Activated CD8-positive, alpha-beta T cell treated with anti-CD3 and anti-CD28 coated beads, Interleukin-2, amount 10 ng/mL, durations not matched to agents 7 days and 5 days (primary cell): ENCODE measurements at regions of chr5 and their contacts with region 1.

Region 1: GRCh38 chr5:160081495-160081894 is 37.8 kb downstream of the PWWP2A start:
- DNase-seq: no peak
- ATAC-seq: no peak
- H3K4me3 Mint-ChIP-seq: no peak overlapping the region
- H3K27ac Mint-ChIP-seq: no peak overlapping the region
- H3K4me1 Mint-ChIP-seq: no peaks in the 10 kb centered on the region
- H3K27me3 Mint-ChIP-seq: no peaks in the 10 kb centered on the region

Region 2: DNA sequence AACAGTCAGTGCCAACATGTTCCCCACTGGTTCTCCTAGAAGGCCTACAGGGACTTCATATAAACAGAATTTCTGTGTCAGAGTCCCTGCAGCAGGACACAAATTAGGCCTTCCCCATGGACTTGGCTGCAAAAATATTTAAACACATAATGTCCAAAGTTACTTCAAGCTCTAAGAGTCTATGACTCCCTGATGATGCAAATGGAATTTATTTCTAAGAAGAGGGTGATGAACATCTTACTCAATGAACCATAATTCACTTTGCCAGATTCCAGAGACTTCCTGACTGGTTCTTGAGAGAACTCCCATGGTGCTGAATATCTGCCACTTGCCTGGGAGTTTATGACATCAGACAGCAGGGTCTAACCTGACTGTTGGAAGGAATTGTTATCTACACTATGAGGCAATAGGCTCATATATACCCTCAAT is 198.0 kb before region 1 on chr5:
- CTCF ChIA-PET with region 1: no interaction called
- POLR2A ChIA-PET with region 1: no interaction called
- DNase-seq: no peak
- ATAC-seq: no peak
- H3K4me3 Mint-ChIP-seq: no peak overlapping the region
- H3K27ac Mint-ChIP-seq: no peak overlapping the region
- H3K4me1 Mint-ChIP-seq: no peaks in the 10 kb centered on the region
- H3K27me3 Mint-ChIP-seq: peaks cover 5% of the 10 kb centered on the region

Region 3: GRCh38 chr5:159936686-159937329 is 144.7 kb before region 1 on chr5:
- CTCF ChIA-PET with region 1: no interaction called
- POLR2A ChIA-PET with region 1: no interaction called
- DNase-seq: no peak
- ATAC-seq: no peak
- H3K4me3 Mint-ChIP-seq: no peak overlapping the region
- H3K27ac Mint-ChIP-seq: no peak overlapping the region
- H3K4me1 Mint-ChIP-seq: peaks cover 12% of the 10 kb centered on the region
- H3K27me3 Mint-ChIP-seq: peaks cover 33% of the 10 kb centered on the region

Region 4: DNA sequence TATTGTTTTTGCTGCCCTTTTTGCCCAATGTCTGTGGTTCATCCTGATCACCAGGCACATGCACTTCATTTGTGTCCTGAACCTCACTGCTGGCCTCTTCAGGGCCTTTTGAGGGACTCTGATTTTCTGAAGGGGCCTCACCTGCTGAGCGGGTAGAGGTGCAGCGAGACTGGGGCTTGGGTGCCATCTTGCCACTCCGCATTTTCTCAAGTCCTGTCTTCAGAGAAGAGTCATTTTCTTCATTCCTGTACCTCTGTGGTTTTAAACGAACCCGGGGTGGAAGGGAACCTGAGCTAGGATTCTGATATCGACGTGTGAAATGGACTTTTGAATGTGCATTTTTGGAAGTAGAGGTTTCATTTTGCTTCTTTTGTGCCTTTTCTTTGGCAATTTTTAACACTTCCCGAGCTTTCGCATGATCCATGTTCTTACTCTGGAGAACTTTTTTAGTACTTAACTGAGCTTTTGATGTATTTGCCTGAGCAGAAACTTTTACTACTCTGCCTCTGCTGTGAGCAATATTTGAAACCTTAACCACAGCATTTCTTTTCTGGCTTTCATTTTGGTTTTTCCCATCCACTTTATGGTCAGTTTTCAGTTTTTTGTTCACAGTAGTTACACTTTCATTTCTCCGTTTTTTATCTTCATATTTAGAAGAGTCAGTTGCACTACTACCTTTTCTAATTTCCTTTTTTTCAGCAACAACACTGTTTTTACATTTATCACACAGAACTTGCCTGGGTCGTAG is 11.6 kb after region 1 on chr5:
- CTCF ChIA-PET with region 1: interaction called, 14 read pairs
- POLR2A ChIA-PET with region 1: no interaction called
- DNase-seq: no peak
- ATAC-seq: no peak
- H3K4me3 Mint-ChIP-seq: peak overlapping the region; percentile 7
- H3K27ac Mint-ChIP-seq: peak overlapping the region; percentile 78
- H3K4me1 Mint-ChIP-seq: peaks cover 30% of the 10 kb centered on the region
- H3K27me3 Mint-ChIP-seq: no peaks in the 10 kb centered on the region

Region 5: DNA sequence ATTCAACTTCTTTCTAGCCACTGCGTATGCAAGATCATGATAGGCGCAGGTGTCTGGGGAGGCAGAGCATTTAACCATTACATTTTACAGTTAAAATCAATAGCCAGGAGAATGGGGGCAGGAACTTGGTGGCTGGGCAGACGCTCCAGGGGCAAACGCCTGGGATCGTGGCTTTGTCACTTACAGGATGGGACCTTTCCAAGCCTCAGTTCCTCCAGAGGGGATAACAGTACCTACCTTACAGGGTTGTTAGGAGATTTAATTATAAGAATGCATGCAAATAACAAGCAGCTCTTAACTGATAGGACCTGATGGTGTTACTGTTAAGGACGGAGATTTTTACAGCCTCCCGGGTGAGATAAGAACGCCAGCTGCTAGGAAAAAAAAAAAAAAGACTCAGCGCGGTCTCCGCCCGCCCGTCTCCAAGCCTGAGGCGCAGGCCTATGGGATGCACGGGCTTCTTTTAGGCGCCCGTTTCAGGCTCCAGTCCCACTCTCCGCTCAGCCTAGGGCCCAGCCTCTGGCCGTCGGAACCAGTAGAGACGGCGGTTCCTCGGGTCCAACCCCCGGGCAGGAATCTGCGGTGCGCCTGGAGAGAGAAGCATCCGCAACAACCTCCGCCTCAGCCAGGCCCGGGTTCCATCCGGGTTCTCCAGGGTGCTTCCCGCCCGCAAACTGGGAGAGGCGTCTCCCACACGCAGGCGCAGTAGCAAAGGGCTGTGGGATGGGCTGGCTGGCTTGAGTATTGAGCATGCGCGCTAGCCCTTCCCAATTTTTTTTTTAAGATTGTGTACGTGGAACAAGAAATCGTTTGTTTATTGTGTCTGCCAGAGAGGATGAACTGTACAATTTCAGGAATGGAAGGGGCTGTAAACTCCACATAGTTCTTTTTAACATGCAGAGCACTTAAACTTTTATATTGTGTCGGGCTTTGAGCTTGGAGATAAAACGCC is 318.2 kb after region 1 on chr5 and contains the start of gene FAM200C:
- CTCF ChIA-PET with region 1: no interaction called
- POLR2A ChIA-PET with region 1: no interaction called
- DNase-seq: peak; percentile 77
- ATAC-seq: peak; percentile 89
- H3K4me3 Mint-ChIP-seq: peak within 1 kb of the TSS; percentile 90
- H3K27ac Mint-ChIP-seq: peak within 1 kb of the TSS; percentile 67
- H3K4me1 Mint-ChIP-seq: peaks cover 15% of the 10 kb centered on the region
- H3K27me3 Mint-ChIP-seq: no peaks in the 10 kb centered on the region
- total RNA-seq, gene FAM200C: 0.29 to 0.45 TPM